Activated T-helper 2 cell treated with anti-CD3 and anti-CD28 coated beads, Interferon-gamma antibody, Interleukin-2, Interleukin-4, amounts not matched to agents 10 μg/mL and 5 μg/mL and 100 μg/mL, durations not matched to agents 14 hours and 24 hours and 36 hours (primary cell): ENCODE measurements at regions of chr1 and their contacts with region 1.

Region 1: DNA sequence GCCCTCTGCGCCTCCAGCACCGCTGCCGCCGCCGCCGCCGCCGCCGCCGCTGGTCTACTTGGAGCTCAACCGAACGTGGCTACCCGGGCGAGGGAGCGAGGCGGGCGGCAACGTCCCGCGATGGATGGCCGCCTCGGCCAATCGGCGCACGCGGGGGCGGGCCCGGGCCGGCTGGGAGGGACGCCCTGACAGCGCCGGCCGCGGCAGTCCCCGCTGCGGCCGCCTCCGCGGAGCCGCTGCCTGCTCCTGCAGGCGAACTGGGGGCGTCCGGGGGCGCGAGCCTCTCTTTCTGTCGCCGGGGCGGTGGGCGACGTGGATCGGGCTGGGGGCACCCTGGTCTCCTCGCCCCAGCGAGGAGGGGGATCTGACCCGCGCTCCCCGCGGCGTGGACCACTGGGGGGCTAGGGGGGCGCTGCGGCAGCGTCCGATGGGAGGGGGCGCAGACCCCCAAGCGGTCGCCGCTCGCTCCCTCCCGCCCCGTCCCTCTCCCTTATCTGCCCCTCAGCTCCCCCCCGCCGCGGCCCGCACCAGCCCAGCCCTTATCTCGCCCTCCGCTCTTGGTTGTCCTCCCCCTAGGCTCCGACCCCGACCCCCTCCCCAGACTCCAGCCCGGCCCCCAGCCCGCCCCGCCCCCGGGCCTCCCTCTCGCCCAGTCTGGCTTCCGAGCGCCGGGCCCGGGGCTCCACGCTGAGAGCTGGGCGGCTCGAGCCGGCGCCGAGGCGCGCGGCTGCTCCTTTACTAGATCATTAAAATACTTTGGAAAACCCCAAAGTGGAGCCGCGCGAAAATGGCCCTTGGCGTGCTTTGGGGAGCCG is at the start of gene SSBP3:
- DNase-seq: peak; percentile 91
- H3K4me3 Mint-ChIP-seq: peak within 1 kb of the TSS; percentile 90
- H3K27ac Mint-ChIP-seq: peak within 1 kb of the TSS; percentile 94
- H3K4me1 Mint-ChIP-seq: peaks cover 58% of the 10 kb centered on the region
- H3K27me3 Mint-ChIP-seq: no peaks in the 10 kb centered on the region
- total RNA-seq, gene SSBP3: 84.4 and 89.9 TPM in 2 replicates

Region 2: DNA sequence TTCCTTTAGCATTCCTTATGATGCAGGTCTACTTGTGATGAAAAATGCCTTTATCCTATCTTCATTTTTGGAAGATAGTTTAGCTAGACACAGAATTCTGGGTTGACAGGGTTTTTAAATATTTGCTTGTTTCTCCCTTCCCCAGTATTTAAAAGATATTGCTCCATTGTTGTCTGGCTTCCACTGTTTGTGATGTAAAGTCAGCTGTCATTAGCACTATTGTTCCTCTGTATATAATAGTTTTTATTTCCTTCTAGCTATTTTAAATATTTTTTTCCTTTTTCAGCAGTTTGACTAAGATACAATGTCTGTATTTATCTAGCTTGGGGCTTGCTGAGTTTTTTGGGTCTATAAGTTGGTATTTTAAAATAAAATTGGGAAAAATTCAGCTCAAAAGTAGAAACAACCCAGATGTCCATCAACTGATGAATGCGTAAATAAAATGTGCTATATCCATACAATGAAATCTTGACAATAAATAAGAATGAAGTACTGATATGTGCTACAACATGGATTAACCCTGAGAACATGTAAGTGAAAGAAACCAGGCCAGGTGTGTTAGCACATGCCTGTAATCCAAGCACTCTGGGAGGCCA is 472.3 kb before region 1 on chr1:
- intact Hi-C with region 1: no loop called
- DNase-seq: no peak
- H3K4me3 Mint-ChIP-seq: no peak overlapping the region
- H3K27ac Mint-ChIP-seq: no peak overlapping the region
- H3K4me1 Mint-ChIP-seq: peaks cover 13% of the 10 kb centered on the region
- H3K27me3 Mint-ChIP-seq: no peaks in the 10 kb centered on the region

Region 3: DNA sequence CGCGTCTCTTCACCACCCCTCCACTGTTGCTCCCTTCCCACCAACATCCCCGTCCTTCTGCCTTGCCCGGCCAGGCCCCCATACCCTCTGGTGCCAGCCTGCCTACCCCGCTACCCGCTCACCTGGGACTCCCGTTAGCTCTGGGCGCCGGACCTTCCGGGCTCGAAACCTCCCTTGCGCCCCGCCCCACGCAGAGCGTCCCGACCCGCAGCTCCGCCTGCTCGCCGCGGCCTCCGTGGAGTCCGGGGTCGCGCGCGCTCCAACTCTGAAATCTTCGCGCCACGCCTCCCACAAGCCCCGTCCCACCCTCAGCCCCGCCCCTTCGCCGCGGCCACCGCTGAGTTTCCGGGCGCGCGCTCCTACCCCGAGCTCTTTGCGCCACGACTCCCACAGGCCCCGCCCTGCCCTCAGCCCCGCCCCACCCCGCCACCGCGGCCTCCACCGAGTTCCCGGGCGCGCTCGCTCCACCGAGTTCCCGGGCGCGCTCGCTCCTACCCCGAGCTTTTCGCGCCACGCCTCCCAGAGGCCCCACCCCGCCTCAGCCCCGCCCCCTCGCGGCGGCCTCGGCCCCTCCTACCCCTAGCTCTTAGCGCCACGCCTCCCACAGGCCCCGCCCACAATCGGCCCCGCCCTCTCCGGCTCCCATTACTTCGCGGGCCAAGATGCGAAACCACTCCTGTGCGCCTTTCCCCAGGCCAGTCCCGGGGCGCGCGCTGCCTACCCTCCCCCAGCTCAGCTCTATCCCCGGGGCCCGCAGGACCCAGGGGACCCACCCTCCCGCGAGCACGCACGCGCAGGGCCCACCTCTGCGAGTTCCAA is 460.9 kb before region 1 on chr1 and contains the start of gene IFT25:
- intact Hi-C with region 1: loop called (anchors 10 kb)
- DNase-seq: peak; percentile 96
- H3K4me3 Mint-ChIP-seq: peak within 1 kb of the TSS; percentile 92
- H3K27ac Mint-ChIP-seq: peak within 1 kb of the TSS; percentile 87
- H3K4me1 Mint-ChIP-seq: peaks cover 46% of the 10 kb centered on the region
- H3K27me3 Mint-ChIP-seq: no peaks in the 10 kb centered on the region
- total RNA-seq, gene IFT25: 52.9 and 54.3 TPM in 2 replicates

Region 4: GRCh38 chr1:54229281-54229891 is 177.2 kb before region 1 on chr1:
- intact Hi-C with region 1: loop called (anchors 1 kb)
- DNase-seq: peak; percentile 23
- H3K4me3 Mint-ChIP-seq: peak overlapping the region; percentile 64
- H3K27ac Mint-ChIP-seq: peak overlapping the region; percentile 66
- H3K4me1 Mint-ChIP-seq: peaks cover 29% of the 10 kb centered on the region
- H3K27me3 Mint-ChIP-seq: no peaks in the 10 kb centered on the region

Region 5: DNA sequence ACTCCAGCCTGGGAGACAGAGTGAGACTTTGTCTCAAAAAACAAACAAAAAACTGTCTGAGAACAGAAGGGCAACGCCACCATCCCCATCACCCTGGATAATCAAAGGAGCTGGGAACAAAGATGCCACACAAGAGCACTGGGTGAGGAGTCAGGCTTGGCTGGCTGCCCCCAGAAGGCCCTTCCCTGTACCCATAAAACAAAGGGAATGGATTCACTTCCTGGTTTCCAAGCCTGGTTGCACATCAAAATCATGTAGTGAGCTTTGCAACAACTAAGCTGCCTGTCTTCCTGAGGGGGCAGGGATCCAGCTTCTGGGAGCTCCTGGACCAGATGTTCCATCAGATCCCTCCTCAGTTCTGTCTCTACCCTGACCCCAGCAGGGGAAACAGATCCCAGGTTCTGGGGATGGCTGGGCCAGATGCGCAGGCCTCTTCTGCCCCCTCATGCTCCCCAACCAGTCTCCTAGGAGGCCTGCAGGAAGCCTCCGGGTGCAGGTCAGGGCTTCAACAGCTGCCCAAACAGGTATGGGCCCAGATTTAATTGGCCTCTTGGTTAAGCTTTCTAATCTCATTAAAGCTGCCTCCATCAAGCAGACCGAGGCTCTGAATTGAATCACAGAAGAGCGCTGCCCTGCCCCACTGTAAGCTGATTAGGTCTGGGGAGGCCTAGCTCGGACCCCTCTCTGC is 108.8 kb before region 1 on chr1:
- intact Hi-C with region 1: no loop called
- DNase-seq: no peak
- H3K4me3 Mint-ChIP-seq: no peak overlapping the region
- H3K27ac Mint-ChIP-seq: peak overlapping the region; percentile 1
- H3K4me1 Mint-ChIP-seq: peaks cover 22% of the 10 kb centered on the region
- H3K27me3 Mint-ChIP-seq: no peaks in the 10 kb centered on the region

Region 6: DNA sequence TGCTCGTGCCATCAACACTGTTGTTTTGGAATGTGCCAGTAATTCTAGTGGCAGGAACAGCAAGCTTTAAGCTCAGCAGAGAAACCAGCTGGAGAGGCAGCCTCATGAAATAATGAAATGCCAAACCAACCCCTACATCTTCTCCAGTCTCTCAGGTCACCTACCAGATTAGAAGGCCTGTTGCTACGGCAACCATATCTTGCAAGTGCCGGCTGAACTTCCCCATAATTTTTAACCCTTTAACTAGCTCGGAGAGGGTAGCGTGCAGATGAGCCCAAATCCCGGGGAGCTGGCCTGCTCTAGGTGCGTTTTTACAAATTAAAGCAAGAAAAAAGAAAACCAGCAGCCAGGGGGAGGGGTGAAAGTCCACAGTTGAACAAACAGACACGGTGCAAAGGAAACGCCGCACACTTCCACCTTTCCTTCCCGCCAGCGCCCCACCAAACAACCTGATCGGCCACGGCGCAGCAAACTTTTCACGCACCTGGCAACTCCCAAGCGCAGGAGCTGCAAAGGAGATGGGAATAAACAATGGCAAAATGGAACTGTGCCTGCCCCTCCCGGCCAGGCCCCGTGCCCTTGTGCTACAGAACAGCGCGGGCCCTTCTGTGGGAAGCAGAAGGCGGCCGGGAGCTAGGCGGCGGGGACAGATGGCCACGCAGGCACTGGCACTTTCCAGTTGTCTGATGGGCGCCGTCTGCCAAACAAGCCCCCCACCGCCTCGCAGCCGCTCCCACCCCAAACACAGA is 50.4 kb before region 1 on chr1:
- intact Hi-C with region 1: loop called (anchors 5 kb)
- DNase-seq: no peak
- H3K4me3 Mint-ChIP-seq: peak overlapping the region; percentile 70
- H3K27ac Mint-ChIP-seq: no peak overlapping the region
- H3K4me1 Mint-ChIP-seq: peaks cover 49% of the 10 kb centered on the region
- H3K27me3 Mint-ChIP-seq: no peaks in the 10 kb centered on the region

Region 7: DNA sequence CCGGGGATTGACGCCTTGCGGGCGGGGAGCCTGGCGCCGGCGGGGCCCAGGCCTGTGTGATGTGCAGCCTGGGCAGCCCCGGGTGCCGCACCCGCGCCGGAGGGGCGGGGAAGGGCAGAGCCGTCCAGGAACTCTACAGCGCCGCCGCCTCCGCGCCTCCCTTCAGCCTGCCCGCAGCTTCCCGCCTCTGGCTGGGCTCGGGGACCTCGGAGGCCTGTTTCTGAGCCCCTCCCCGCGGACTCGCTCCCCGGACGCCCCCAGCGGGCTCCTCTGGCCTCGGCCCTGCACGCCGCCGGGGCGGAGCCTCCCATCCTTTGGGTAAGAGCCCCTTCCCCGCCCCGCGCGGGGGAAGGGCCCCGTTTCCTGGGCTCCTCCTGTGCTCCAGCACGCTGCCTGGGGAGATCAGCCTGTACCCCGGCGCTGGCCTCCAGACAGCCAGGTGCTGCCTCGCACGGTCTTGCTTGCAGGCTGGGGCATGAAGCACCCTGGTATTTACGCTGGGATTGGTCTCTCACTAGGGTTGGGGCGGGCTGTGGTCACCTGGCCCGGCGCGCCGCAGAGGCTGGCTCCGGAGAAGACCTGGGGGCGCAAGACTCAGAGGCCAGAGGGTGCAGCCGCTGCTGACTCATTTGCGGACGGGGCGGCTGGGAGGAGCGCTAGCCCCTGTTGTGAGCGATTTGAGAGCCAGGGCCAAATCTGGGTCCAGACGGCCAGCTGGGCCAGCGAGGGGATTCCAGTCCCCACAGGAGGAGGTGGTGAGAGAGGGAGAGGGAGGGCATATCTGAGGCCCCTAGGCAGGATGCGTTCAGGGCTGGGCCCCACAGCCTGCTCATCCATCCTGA is 135.8 kb after region 1 on chr1:
- intact Hi-C with region 1: loop called (anchors 5 kb)
- DNase-seq: peak; percentile 55
- H3K4me3 Mint-ChIP-seq: peak overlapping the region; percentile 75
- H3K27ac Mint-ChIP-seq: peak overlapping the region; percentile 52
- H3K4me1 Mint-ChIP-seq: peaks cover 11% of the 10 kb centered on the region
- H3K27me3 Mint-ChIP-seq: peaks cover 14% of the 10 kb centered on the region